ENCODE measurements at regions of chr7 and their contacts with region 1.

Region 1: DNA sequence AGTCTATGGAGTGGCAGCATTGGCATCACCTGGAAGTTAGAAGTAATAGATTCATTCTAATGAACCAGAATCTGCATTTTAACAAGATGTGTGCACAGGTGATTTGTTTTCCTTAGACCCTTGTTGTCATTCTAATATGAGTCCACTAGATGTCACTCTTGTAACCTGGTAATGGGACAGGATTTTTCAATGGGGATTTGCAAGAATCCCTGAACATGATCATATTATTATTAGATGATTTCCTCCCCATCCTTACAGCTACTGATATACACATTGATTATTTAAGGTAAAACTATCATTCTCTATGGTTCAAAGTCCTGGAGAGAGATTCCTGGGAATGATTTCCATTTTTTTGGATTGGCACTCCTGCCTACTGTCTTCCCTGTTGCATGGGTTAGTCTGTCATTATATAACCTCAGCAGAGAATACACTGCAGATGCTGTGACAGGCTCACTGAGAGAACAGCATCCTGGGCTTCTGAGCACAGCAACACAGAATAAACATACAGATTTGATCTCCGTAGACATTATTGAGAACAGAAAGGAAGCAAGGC is 194.9 kb downstream of the SUGCT start:
- DNase-seq: no peak
- ATAC-seq: peak; percentile 81
- H3K4me3 ChIP-seq: no peak overlapping the region
- H3K27ac ChIP-seq: peak overlapping the region in 1 of 2 donors; percentile 68
- H3K4me1 ChIP-seq: peaks cover 0 to 1% of the 10 kb centered on the region in 2 donors
- H3K27me3 ChIP-seq: no peaks in the 10 kb centered on the region

Region 2: DNA sequence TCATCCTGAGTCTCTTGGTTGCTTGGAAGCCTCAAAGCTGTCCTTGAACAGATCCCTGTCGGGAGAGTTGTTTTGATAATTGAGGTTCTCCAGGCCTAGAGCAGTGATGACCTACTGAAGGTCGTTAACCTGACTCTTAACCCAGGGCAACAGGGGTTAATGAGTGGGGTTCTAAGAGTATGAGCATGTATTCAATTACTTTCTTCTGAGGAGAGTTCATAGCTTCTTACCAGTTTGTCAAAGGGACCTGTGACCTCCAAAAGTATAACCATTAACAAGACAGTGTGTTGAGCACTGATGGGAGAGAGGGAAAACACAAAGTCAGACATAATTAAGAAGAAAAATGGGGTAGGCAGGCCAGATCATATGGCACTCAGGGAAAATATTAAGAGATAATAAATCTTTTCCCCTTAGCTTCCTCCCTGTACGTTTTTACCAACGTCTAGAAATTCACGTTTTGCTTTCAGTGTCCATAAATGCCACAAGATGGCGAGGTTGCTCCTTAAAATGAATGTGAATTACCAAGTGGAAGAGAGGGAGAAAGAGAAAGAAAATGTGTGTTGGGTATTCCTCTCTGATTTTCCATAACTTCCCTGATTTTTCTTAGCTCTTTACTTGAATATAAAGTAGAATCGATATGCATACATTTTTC is 97.3 kb before region 1 on chr7:
- intact Hi-C with region 1: loop called in 1 of 2 experiments (anchors 10 kb)
- DNase-seq: no peak
- ATAC-seq: no peak
- H3K4me3 ChIP-seq: no peak overlapping the region
- H3K27ac ChIP-seq: no peak overlapping the region
- H3K4me1 ChIP-seq: no peaks in the 10 kb centered on the region
- H3K27me3 ChIP-seq: no peaks in the 10 kb centered on the region

Region 3: DNA sequence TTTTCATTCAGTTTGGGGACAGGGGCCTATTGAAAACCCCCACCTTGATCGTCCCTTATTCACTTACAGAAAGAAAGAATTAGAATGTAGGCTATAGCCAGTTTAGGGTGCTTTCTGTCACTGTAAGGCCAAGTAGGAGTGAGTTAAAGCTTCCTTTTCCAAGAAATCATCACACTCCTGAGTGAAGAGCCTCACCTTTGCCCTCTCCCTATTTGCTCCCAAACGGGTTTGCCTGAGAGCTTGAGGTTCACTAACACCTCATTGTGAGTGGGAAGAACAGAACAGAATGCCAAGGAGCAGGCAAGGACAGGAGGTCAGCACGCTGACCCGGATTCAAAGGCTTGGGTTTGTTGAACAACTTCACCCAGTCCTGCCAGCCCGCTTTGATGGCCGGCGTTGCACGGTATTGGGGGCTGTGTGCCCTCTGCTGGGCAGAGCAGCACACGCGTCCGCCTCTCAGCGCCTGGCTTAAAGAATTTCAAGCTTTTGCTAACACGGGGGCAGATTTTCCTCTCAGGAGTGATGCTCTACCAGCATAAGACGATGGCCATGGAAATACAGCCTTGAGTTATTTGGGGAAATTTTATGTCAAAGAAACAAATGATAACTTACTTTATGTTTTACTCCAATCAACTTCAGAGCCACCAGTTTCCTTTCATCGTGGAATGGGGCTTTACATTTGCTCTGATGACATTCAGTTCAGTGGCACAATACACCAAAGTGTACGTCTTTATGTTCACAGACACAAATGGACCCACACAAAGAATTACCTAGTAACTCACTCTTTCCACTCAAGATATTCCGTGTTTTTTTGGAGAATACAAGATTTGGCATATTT is 275.1 kb after region 1 on chr7:
- intact Hi-C with region 1: loop called (anchors 5 to 10 kb)
- DNase-seq: peak; percentile 73 to 84
- ATAC-seq: peak; percentile 81
- H3K4me3 ChIP-seq: no peak overlapping the region
- H3K27ac ChIP-seq: no peak overlapping the region
- H3K4me1 ChIP-seq: peaks cover 1 to 5% of the 10 kb centered on the region in 2 donors
- H3K27me3 ChIP-seq: no peaks in the 10 kb centered on the region

Region 4: GRCh38 chr7:40763318-40764287 is 433.9 kb after region 1 on chr7:
- intact Hi-C with region 1: loop called (anchors 5 kb)
- DNase-seq: no peak
- ATAC-seq: peak; percentile 39
- H3K4me3 ChIP-seq: peak overlapping the region in 1 of 2 donors; percentile 18
- H3K27ac ChIP-seq: peak overlapping the region; percentile 14 to 69
- H3K4me1 ChIP-seq: peaks cover 2 to 7% of the 10 kb centered on the region in 2 donors
- H3K27me3 ChIP-seq: no peaks in the 10 kb centered on the region

Region 5: DNA sequence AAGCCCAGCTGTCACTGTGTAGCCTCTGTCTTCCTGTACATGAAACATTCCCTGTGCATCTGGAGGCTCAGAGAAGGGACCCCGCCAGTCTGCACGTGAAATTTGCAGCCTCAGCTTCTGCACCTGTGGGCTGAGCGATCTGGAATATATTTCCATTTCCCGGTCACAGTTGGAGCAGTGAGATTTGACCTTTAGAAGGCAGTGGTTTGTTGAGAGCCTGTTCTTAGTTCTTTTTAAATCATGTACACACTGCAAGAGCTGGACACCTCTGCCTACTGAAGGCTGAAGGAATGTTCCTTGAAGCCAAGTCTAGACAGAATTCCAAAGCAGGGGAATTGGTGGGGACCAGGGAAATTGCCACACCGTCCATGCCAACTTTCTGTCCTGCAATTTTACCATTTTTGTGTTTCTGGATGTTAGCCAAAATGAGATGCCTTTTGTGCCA is 666.6 kb after region 1 on chr7:
- intact Hi-C with region 1: loop called in 1 of 2 experiments (anchors 10 kb)
- DNase-seq: no peak
- ATAC-seq: peak; percentile 45
- H3K4me3 ChIP-seq: no peak overlapping the region
- H3K27ac ChIP-seq: no peak overlapping the region
- H3K4me1 ChIP-seq: peaks cover 6 to 10% of the 10 kb centered on the region in 2 donors
- H3K27me3 ChIP-seq: no peaks in the 10 kb centered on the region